Activated CD8-positive, alpha-beta T cell treated with anti-CD3 and anti-CD28 coated beads for 36 hours (primary cell): ENCODE measurements at regions of chr10 and their contacts with region 1.

Region 1: DNA sequence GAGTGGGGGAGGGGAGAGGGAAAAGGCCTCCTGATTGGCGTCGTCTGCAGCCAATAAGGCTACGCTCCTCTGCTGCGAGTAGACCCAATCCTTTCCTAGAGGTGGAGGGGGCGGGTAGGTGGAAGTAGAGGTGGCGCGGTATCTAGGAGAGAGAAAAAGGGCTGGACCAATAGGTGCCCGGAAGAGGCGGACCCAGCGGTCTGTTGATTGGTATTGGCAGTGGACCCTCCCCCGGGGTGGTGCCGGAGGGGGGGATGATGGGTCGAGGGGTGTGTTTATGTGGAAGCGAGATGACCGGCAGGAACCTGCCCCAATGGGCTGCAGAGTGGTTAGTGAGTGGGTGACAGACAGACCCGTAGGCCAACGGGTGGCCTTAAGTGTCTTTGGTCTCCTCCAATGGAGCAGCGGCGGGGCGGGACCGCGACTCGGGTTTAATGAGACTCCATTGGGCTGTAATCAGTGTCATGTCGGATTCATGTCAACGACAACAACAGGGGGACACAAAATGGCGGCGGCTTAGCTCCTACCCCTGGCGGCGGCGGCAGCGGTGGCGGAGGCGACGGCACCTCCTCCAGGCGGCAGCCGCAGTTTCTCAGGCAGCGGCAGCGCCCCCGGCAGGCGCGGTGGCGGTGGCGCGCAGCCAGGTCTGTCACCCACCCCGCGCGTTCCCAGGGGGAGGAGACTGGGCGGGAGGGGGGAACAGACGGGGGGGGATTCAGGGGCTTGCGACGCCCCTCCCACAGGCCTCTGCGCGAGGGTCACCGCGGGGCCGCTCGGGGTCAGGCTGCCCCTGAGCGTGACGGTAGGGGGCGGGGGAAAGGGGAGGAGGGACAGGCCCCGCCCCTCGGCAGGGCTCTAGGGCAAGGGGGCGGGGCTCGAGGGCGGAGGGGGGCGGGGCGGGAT is at the start of gene KAT6B:
- DNase-seq: peak; percentile 100
- ATAC-seq: peak; percentile 85
- H3K4me3 Mint-ChIP-seq: peak within 1 kb of the TSS; percentile 89
- H3K27ac Mint-ChIP-seq: peak within 1 kb of the TSS; percentile 92
- H3K4me1 Mint-ChIP-seq: peaks cover 58% of the 10 kb centered on the region
- H3K27me3 Mint-ChIP-seq: no peaks in the 10 kb centered on the region
- CTCF ChIP-seq: no peak
- total RNA-seq, gene KAT6B: 22.8 to 24.8 TPM

Region 2: GRCh38 chr10:74589226-74589673 is 237.1 kb before region 1 on chr10:
- CTCF ChIA-PET with region 1: no interaction called
- POLR2A ChIA-PET with region 1: interaction called, 3 read pairs
- intact Hi-C with region 1: loop called (anchors 5 kb)
- DNase-seq: peak; percentile 95
- ATAC-seq: peak; percentile 55
- H3K4me3 Mint-ChIP-seq: peak overlapping the region; percentile 9
- H3K27ac Mint-ChIP-seq: peak overlapping the region; percentile 81
- H3K4me1 Mint-ChIP-seq: peaks cover 65% of the 10 kb centered on the region
- H3K27me3 Mint-ChIP-seq: no peaks in the 10 kb centered on the region
- CTCF ChIP-seq: no peak

Region 3: GRCh38 chr10:74799721-74800221 is 26.6 kb before region 1 on chr10:
- CTCF ChIA-PET with region 1: no interaction called
- POLR2A ChIA-PET with region 1: no interaction called
- intact Hi-C with region 1: no loop called
- DNase-seq: peak; percentile 57
- ATAC-seq: peak; percentile 92
- H3K4me3 Mint-ChIP-seq: no peak overlapping the region
- H3K27ac Mint-ChIP-seq: peak overlapping the region; percentile 32
- H3K4me1 Mint-ChIP-seq: peaks cover 12% of the 10 kb centered on the region
- H3K27me3 Mint-ChIP-seq: no peaks in the 10 kb centered on the region
- CTCF ChIP-seq: no peak